ENCODE measurements at regions of chr10 and their contacts with region 1.

Region 1: GRCh38 chr10:101602761-101603398 is 14.8 kb downstream of the DPCD start:
- DNase-seq: peak; percentile 70 to 86
- ATAC-seq: peak; percentile 86 to 94 (median 90)
- H3K4me3 ChIP-seq: no peak overlapping the region
- H3K27ac ChIP-seq: no peak overlapping the region
- H3K4me1 ChIP-seq: no peaks in the 10 kb centered on the region
- H3K27me3 ChIP-seq: no peaks in the 10 kb centered on the region
- CTCF ChIP-seq: peak; percentile 87

Region 2: GRCh38 chr10:101709359-101710058 is 106.6 kb after region 1 on chr10:
- intact Hi-C with region 1: loop called (anchors 5 kb)
- DNase-seq: no peak
- ATAC-seq: no peak
- H3K4me3 ChIP-seq: no peak overlapping the region
- H3K27ac ChIP-seq: no peak overlapping the region
- H3K4me1 ChIP-seq: no peaks in the 10 kb centered on the region
- H3K27me3 ChIP-seq: no peaks in the 10 kb centered on the region
- CTCF ChIP-seq: no peak

Region 3: DNA sequence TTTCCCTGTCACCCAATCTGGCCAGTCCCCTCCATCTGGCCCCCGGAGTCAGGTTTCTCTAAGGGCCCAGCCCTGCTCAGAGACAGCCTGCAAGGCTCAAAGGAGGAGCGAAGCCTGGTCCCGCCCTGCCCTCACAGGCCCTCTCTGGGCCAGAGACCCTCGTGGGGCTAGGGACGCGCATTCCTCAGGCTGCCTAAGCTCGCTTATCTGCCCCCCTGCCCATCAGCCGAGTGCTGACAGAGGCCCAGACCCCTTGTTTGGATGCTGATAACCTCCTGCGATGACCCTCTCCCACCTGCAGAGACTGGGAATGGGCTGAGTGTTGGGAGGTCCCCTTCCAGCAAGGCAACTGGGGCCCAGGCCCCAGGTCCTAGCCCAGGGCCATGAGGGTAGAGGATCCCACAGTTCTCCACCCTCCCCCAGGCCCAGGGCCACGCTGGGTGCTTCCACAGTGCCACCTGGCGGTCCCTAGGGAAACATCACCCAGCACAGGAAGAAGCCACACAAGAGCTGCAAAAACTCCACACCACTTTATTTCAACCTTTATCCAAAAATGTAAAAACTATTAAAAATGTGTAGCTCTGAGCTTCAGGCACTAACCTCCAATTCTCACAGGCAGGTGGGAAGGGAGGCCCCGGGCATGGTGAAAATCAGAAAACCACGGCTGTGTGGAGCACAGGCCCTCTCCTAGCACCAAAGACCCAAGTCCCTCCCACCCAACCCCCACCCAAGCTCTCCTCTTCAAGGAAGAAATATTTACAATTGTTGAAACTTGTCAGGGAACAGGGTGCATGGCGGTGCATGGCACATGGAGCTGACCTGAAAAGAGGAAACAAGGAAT is 178.2 kb after region 1 on chr10:
- intact Hi-C with region 1: loop called (anchors 1 to 2 kb)
- DNase-seq: peak; percentile 59 to 79
- ATAC-seq: peak; percentile 66 to 72 (median 68)
- H3K4me3 ChIP-seq: no peak overlapping the region
- H3K27ac ChIP-seq: no peak overlapping the region
- H3K4me1 ChIP-seq: peaks cover 39% of the 10 kb centered on the region
- H3K27me3 ChIP-seq: peaks cover 0 to 36% (median 10%) of the 10 kb centered on the region in 3 donors
- CTCF ChIP-seq: peak; percentile 82

Region 4: DNA sequence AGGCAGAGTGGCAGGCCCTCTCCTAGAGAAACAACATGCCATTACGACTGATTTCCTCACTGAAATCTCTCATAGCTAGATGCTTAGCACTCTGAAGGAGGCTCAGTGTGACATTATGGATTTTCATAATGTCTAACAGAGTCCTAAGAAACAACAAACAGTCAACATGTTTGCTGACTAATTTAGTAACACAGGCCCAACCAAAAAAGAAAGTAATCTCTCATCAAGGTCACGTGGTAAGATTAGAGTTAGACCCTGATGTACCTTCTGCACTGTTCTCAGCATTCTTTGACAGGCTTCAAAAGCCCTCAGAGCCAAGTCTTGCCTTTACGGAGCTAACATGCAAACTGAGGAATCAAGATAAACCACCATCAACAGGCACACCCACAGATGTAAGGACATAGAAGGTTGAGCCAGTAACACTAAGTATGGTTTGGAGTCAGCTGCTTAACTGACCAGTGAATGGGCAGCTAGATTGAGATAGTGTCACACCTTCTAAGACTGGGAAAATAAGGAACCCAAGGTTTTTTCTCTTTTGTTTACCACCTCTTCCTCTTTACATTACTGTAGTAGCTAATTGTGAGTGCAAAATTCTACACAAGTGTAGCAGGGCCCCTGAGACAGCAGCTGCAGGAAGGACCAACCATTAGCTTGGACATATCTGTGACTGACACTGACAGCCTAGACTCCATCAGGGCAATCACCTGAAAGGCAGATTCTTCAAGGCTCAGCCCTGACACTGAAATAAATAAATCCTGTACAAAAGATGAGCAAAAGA is 256.0 kb after region 1 on chr10:
- intact Hi-C with region 1: no loop called
- DNase-seq: no peak
- ATAC-seq: no peak
- H3K4me3 ChIP-seq: no peak overlapping the region
- H3K27ac ChIP-seq: no peak overlapping the region
- H3K4me1 ChIP-seq: no peaks in the 10 kb centered on the region
- H3K27me3 ChIP-seq: no peaks in the 10 kb centered on the region
- CTCF ChIP-seq: no peak

Measured in psoas muscle (tissue), 8 donors.